Activated T-helper 2 cell treated with anti-CD3 and anti-CD28 coated beads, Interferon-gamma antibody, Interleukin-2, Interleukin-4, amounts not matched to agents 10 μg/mL and 5 μg/mL and 100 μg/mL, durations not matched to agents 14 hours and 24 hours and 36 hours (primary cell): ENCODE measurements at regions of chr4 and their contacts with region 1.

Region 1: DNA sequence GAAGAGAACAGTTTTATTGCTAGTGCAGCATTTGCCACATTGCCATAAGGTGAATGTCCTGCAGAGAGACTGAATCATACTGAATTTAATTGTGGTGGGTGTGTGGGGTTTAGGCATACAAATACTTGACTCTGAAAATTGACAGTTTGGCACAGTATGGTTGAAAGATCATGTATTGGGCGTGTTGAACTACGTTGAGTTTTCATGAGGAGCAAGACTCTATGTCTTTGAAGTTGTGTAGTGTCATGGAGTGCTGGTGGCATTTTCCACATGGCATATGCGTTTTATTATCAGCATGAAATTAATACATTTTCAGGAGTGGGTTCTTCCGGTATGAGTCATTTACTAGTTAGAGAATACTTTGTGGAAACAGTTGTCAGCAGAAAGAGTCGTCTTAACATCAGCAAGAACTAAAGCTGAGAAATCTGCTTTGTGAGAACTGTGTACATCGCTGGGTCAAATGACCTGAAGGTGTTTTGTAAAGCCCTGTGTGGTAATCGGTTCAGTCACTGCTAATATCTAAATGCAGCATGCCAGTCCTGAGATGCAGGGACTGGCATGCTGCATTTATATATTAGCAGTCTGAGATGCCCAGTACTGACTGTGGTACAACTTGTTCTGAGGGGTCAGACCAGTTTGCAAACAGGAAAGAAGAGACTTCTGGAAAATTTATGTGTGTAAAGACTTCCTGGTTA is 50.3 kb downstream of the ARHGAP10 start:
- DNase-seq: no peak
- H3K4me3 Mint-ChIP-seq: no peak overlapping the region
- H3K27ac Mint-ChIP-seq: peak overlapping the region; percentile 31
- H3K4me1 Mint-ChIP-seq: peaks cover 61% of the 10 kb centered on the region
- H3K27me3 Mint-ChIP-seq: no peaks in the 10 kb centered on the region

Region 2: DNA sequence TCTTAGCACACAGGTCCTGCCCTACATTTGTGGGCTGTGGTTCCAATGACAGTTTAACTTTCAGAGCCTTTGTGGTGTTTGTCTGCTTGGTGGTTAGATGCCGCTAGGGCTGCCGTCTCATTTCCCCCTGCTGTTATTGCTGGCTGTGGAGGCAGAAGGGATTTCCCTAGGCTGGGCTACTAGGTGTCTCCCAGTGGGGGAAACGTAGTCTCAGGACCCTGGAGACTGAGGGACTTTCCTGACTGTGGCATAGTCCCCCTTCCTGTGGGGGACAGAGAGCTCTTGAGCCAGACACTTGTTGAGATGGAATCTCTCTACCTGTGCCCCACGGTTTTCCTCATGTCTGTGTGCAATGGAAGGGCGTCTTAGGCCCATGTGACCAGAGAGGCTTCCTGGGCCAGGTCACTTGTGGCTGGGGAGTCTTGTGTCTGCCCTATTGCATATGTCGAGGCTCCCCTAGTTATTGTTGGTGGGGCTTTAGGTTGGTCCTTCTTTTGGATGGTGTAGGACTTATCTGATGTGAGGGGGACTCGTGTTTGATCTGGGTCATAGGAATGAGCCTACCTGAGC is 17.8 kb after region 1 on chr4:
- intact Hi-C with region 1: loop called (anchors 1 kb)
- DNase-seq: peak; percentile 70
- H3K4me3 Mint-ChIP-seq: peak overlapping the region; percentile 67
- H3K27ac Mint-ChIP-seq: peak overlapping the region; percentile 93
- H3K4me1 Mint-ChIP-seq: peaks cover 77% of the 10 kb centered on the region
- H3K27me3 Mint-ChIP-seq: no peaks in the 10 kb centered on the region

Region 3: GRCh38 chr4:148056869-148057268 is 274.6 kb after region 1 on chr4:
- intact Hi-C with region 1: no loop called
- DNase-seq: peak; percentile 41
- H3K4me3 Mint-ChIP-seq: no peak overlapping the region
- H3K27ac Mint-ChIP-seq: no peak overlapping the region
- H3K4me1 Mint-ChIP-seq: peaks cover 64% of the 10 kb centered on the region
- H3K27me3 Mint-ChIP-seq: no peaks in the 10 kb centered on the region